ENCODE measurements at regions of chr1 and their contacts with region 1.

Region 1: GRCh38 chr1:218171285-218171893 is 113.7 kb upstream of the RRP15 start:
- DNase-seq: peak; percentile 49
- ATAC-seq: peak; percentile 62
- H3K4me3 ChIP-seq: no peak overlapping the region
- H3K27ac ChIP-seq: no peak overlapping the region
- H3K4me1 ChIP-seq: no peaks in the 10 kb centered on the region
- H3K27me3 ChIP-seq: peaks cover 13% of the 10 kb centered on the region
- CTCF ChIP-seq: peak; percentile 84
- POLR2A ChIP-seq: no peak
- RAD21 ChIP-seq: peak; percentile 73

Region 2: DNA sequence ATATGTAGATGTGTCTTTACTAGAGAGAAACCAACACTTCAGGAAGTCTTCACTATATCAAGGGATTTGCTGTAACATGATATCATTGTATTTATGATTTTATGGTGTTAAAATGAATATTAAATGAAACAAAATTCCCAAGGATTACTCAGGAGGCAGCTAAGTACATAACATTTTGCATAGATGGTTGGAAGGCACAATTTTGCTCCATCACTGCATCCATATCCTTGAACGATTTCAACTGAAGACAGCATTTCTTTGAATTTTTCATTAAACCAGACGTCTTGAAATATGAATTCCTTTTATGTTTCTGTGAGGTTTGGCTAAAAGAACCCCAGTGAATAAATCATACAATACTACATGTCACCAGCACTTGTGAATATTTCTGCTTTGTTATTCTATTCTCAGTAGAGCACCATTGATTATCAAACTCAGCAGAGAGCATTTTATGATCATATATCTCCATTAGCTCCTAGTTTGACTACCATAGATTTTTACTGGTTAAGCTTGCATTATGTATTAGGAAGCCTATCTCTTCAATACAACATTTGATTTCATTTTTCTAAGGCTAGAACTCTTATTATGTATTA is 502.9 kb before region 1 on chr1:
- CTCF ChIA-PET with region 1: no interaction called
- POLR2A ChIA-PET with region 1: no interaction called
- dilution Hi-C with region 1: no loop called
- in situ Hi-C with region 1: no loop called
- intact Hi-C with region 1: loop called (anchors 5 kb)
- DNase-seq: no peak
- ATAC-seq: no peak
- H3K4me3 ChIP-seq: no peak overlapping the region
- H3K27ac ChIP-seq: no peak overlapping the region
- H3K4me1 ChIP-seq: no peaks in the 10 kb centered on the region
- H3K27me3 ChIP-seq: no peaks in the 10 kb centered on the region
- CTCF ChIP-seq: no peak
- POLR2A ChIP-seq: no peak
- RAD21 ChIP-seq: no peak

Region 3: DNA sequence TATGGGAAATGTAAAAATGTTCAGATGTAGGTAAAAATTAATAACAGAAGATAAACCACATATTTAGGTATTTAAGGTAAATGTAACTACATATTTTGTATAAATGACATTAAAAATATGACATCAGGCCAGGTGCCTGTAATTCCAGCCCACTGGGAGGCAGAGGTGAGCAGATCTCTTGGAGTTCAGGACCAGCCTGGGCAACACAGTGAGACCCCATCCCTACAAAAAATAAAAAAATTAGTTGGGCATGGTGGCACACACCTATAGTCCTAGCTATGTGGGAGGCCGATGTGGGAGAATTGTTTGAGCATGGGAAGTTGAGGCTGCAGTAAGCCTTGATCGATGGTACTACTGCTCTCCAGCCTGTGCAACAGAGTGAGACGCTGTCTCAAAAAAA is 323.7 kb before region 1 on chr1:
- CTCF ChIA-PET with region 1: no interaction called
- POLR2A ChIA-PET with region 1: no interaction called
- dilution Hi-C with region 1: no loop called
- in situ Hi-C with region 1: no loop called
- intact Hi-C with region 1: no loop called
- DNase-seq: no peak
- ATAC-seq: no peak
- H3K4me3 ChIP-seq: no peak overlapping the region
- H3K27ac ChIP-seq: no peak overlapping the region
- H3K4me1 ChIP-seq: no peaks in the 10 kb centered on the region
- H3K27me3 ChIP-seq: no peaks in the 10 kb centered on the region
- CTCF ChIP-seq: no peak
- POLR2A ChIP-seq: no peak
- RAD21 ChIP-seq: no peak

Region 4: GRCh38 chr1:217889401-217889800 is 282.0 kb before region 1 on chr1:
- CTCF ChIA-PET with region 1: no interaction called
- POLR2A ChIA-PET with region 1: no interaction called
- dilution Hi-C with region 1: no loop called
- in situ Hi-C with region 1: no loop called
- intact Hi-C with region 1: loop called (anchors 1 kb)
- DNase-seq: peak; percentile 2
- ATAC-seq: no peak
- H3K4me3 ChIP-seq: no peak overlapping the region
- H3K27ac ChIP-seq: no peak overlapping the region
- H3K4me1 ChIP-seq: no peaks in the 10 kb centered on the region
- H3K27me3 ChIP-seq: no peaks in the 10 kb centered on the region
- CTCF ChIP-seq: 0 out of 2 replicates have a peak, but pooled peaks have one; percentile 14
- POLR2A ChIP-seq: no peak
- RAD21 ChIP-seq: no peak

Region 5: GRCh38 chr1:218207194-218207593 is 35.8 kb after region 1 on chr1:
- CTCF ChIA-PET with region 1: no interaction called
- POLR2A ChIA-PET with region 1: no interaction called
- dilution Hi-C with region 1: no loop called
- in situ Hi-C with region 1: no loop called
- intact Hi-C with region 1: loop called (anchors 2 kb)
- DNase-seq: no peak
- ATAC-seq: no peak
- H3K4me3 ChIP-seq: no peak overlapping the region
- H3K27ac ChIP-seq: no peak overlapping the region
- H3K4me1 ChIP-seq: peaks cover 6% of the 10 kb centered on the region
- H3K27me3 ChIP-seq: no peaks in the 10 kb centered on the region
- CTCF ChIP-seq: no peak
- POLR2A ChIP-seq: no peak
- RAD21 ChIP-seq: no peak

Region 6: DNA sequence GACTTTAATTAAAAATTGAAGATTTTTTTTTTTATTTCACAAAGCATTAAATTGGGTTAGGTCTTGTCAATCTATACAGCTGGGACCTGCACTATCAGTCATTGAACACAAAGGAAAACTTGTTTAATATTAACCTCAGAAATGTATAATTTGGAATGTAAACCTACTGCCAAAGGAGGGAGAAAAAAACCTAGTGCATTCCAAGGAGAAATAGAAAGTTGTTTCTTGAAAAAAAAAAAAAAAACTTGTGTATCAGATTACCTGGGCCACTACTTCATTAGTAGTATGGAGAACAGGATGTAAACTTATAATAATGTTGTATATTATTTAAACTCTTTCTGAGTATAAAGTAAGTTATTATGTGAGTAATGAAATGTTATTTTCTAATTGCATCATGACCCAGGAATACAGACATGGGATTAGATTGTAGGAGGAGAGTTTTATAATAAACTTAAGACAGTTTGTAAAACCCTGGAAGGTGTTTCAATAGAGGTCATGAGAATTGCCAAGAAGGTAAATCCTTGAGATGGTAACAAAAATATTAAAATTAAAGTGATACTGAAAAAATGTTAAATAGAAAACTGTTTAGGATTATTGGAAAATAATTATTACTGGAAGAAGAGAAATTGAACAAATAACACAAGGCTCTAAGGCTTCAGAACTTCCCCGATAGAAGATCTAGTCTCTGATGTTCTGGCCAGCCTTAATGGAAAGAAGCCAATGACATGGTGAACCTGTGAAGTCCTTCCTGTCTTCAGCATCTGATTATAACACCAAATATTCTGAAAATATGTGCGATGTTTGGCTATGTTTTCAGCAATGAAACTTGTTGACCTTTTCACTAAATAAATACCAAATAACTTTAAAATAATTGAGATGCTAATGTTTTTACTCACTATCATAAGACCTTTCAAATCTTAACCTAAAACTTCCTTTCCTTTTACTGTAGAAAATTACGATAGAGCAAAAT is 589.5 kb after region 1 on chr1:
- CTCF ChIA-PET with region 1: no interaction called
- POLR2A ChIA-PET with region 1: no interaction called
- dilution Hi-C with region 1: no loop called
- in situ Hi-C with region 1: no loop called
- intact Hi-C with region 1: no loop called
- DNase-seq: peak; percentile 54
- ATAC-seq: peak; percentile 62
- H3K4me3 ChIP-seq: no peak overlapping the region
- H3K27ac ChIP-seq: no peak overlapping the region
- H3K4me1 ChIP-seq: peaks cover 6% of the 10 kb centered on the region
- H3K27me3 ChIP-seq: no peaks in the 10 kb centered on the region
- CTCF ChIP-seq: no peak
- POLR2A ChIP-seq: no peak
- RAD21 ChIP-seq: no peak

Measured in IMR-90 (cell line).